ENCODE measurements at regions of chr21 and their contacts with region 1.

Region 1: GRCh38 chr21:33360881-33361602 is 36.3 kb downstream of the IFNAR1 start:
- DNase-seq: peak; percentile 89
- ATAC-seq: peak; percentile 81
- H3K4me3 Mint-ChIP-seq: peak overlapping the region; percentile 75
- H3K27ac Mint-ChIP-seq: peak overlapping the region; percentile 48
- H3K4me1 Mint-ChIP-seq: peaks cover 27% of the 10 kb centered on the region
- H3K27me3 Mint-ChIP-seq: no peaks in the 10 kb centered on the region

Region 2: GRCh38 chr21:33266050-33266788 is 94.8 kb before region 1 on chr21 and contains the start of gene IL10RB:
- CTCF ChIA-PET with region 1: interaction called, 14 read pairs
- POLR2A ChIA-PET with region 1: interaction called, 3 read pairs
- DNase-seq: peak; percentile 74
- ATAC-seq: peak; percentile 89
- H3K4me3 Mint-ChIP-seq: peak within 1 kb of the TSS; percentile 96
- H3K27ac Mint-ChIP-seq: peak within 1 kb of the TSS; percentile 93
- H3K4me1 Mint-ChIP-seq: peaks cover 60% of the 10 kb centered on the region
- H3K27me3 Mint-ChIP-seq: no peaks in the 10 kb centered on the region
- total RNA-seq, gene IL10RB: 37.1 to 44.2 TPM

Region 3: DNA sequence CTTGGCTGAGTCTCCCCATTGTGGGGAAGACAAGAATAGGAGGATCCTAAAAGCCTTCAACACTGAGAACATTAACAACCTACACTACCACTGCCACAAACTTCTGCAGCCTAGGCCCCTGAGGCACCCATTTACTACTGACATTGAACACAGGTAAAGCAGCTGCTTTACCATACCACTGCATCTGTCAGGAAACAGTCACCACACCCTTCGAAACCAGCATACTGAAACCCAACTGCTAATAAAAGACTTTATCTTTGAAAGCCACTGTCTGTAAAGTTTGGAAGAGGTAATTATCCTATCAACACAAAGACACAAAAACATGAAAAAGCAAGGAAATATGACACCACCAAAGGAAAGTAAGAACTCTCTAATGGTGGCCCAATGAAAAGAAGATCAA is 28.9 kb before region 1 on chr21:
- CTCF ChIA-PET with region 1: interaction called, 60 read pairs
- POLR2A ChIA-PET with region 1: no interaction called
- DNase-seq: peak; percentile 39
- ATAC-seq: peak; percentile 72
- H3K4me3 Mint-ChIP-seq: no peak overlapping the region
- H3K27ac Mint-ChIP-seq: peak overlapping the region; percentile 54
- H3K4me1 Mint-ChIP-seq: peaks cover 51% of the 10 kb centered on the region
- H3K27me3 Mint-ChIP-seq: no peaks in the 10 kb centered on the region

Region 4: DNA sequence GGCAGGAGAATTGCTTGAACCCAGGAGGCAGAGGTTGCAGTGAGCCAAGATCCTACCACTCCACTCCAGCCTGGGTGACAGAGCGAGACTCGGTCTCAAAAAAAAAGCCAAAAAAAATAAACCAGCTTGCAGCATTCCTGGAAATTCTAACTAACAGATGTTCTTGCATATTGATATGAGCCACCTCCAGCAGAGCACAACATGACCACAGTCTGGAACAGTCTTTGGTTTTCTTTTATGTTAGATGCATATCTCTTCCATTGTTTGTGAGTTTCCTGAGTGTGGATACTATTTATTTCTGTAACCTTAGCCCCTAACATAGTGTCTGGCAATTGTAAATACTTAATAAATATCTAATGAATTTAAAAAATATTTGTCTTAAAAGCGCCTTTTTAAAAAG is 12.3 kb before region 1 on chr21:
- CTCF ChIA-PET with region 1: interaction called, 75 read pairs
- POLR2A ChIA-PET with region 1: interaction called, 13 read pairs
- DNase-seq: no peak
- ATAC-seq: no peak
- H3K4me3 Mint-ChIP-seq: no peak overlapping the region
- H3K27ac Mint-ChIP-seq: no peak overlapping the region
- H3K4me1 Mint-ChIP-seq: peaks cover 4% of the 10 kb centered on the region
- H3K27me3 Mint-ChIP-seq: no peaks in the 10 kb centered on the region

Region 5: GRCh38 chr21:33380483-33380998 is 19.5 kb after region 1 on chr21:
- CTCF ChIA-PET with region 1: interaction called, 36 read pairs
- POLR2A ChIA-PET with region 1: interaction called, 4 read pairs
- DNase-seq: peak; percentile 89
- ATAC-seq: peak; percentile 79
- H3K4me3 Mint-ChIP-seq: peak overlapping the region; percentile 6
- H3K27ac Mint-ChIP-seq: peak overlapping the region; percentile 81
- H3K4me1 Mint-ChIP-seq: peaks cover 69% of the 10 kb centered on the region
- H3K27me3 Mint-ChIP-seq: peaks cover 23% of the 10 kb centered on the region

Region 6: DNA sequence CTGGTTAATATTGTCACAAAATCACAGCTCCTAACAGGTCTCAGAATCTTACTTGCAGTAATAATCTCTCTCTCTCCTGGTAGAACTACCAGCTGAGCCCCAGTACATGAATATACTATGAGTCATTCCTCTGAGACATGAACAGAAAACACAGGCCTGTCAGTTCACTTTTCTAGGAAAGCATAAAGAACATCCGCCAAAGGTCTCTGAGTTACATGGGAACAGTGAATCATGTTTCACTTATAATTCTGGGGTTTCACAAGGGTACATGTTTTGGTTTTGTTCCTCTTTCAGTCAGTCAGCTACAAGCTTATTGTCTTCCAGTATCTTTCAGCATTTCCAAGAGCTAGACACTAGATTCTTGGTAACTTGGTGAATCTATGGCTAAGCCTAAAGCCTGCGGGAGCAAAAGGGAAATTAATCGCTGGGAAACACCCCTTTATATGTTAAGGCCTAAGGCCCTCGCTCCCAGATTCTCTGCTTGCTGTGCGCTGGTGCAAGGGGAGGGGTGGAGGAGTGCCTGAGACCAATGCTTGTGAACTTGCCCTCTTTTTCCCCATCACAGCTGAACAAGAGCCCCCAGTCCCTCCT is 73.8 kb after region 1 on chr21:
- CTCF ChIA-PET with region 1: interaction called, 14 read pairs
- POLR2A ChIA-PET with region 1: no interaction called
- DNase-seq: peak; percentile 55
- ATAC-seq: peak; percentile 94
- H3K4me3 Mint-ChIP-seq: no peak overlapping the region
- H3K27ac Mint-ChIP-seq: peak overlapping the region; percentile 76
- H3K4me1 Mint-ChIP-seq: peaks cover 27% of the 10 kb centered on the region
- H3K27me3 Mint-ChIP-seq: no peaks in the 10 kb centered on the region

Region 7: GRCh38 chr21:33598051-33598450 is 237.0 kb after region 1 on chr21:
- CTCF ChIA-PET with region 1: no interaction called
- POLR2A ChIA-PET with region 1: no interaction called
- DNase-seq: no peak
- ATAC-seq: no peak
- H3K4me3 Mint-ChIP-seq: no peak overlapping the region
- H3K27ac Mint-ChIP-seq: no peak overlapping the region
- H3K4me1 Mint-ChIP-seq: no peaks in the 10 kb centered on the region
- H3K27me3 Mint-ChIP-seq: no peaks in the 10 kb centered on the region

Region 8: DNA sequence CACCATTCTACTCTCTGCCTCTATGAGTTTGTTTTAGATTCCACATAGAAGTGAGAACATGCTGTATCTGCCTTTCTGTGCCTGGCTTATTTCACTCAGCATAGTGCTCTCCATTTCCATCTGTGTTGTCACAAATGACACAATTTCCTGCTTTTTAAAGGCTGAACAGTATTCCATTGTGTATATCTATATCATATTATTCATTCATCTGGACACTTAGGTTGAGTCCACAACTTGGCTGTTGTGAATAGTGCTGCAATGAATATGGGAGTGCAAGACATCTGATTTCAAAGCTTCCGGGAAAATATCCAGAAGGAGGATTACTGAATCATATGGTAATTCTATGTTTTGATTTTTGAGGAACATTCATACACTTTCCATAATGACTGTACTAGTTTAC is 247.5 kb after region 1 on chr21:
- CTCF ChIA-PET with region 1: interaction called, 11 read pairs
- POLR2A ChIA-PET with region 1: no interaction called
- DNase-seq: no peak
- ATAC-seq: no peak
- H3K4me3 Mint-ChIP-seq: no peak overlapping the region
- H3K27ac Mint-ChIP-seq: no peak overlapping the region
- H3K4me1 Mint-ChIP-seq: peaks cover 4% of the 10 kb centered on the region
- H3K27me3 Mint-ChIP-seq: no peaks in the 10 kb centered on the region